Naive thymus-derived CD4-positive, alpha-beta T cell (primary cell): ENCODE measurements at regions of chr2 and their contacts with region 1.

Region 1: GRCh38 chr2:42196403-42197267 is 27.5 kb downstream of the EML4 start:
- DNase-seq: peak in 7 of 9 donors; percentile 56 to 75 (median 68)
- ATAC-seq: peak; percentile 91
- H3K4me3 ChIP-seq: no peak overlapping the region
- H3K4me3 Mint-ChIP-seq: peak overlapping the region in 9 of 10 donors; percentile 1 to 66 (median 41)
- H3K27ac ChIP-seq: peak overlapping the region; percentile 22
- H3K27ac Mint-ChIP-seq: peak overlapping the region in 8 of 9 donors; percentile 17 to 91 (median 74)
- H3K4me1 ChIP-seq: peaks cover 42 to 48% of the 10 kb centered on the region in 2 donors
- H3K4me1 Mint-ChIP-seq: peaks cover 54 to 93% (median 84%) of the 10 kb centered on the region in 7 donors
- H3K27me3 ChIP-seq: no peaks in the 10 kb centered on the region
- H3K27me3 Mint-ChIP-seq: no peaks in the 10 kb centered on the region

Region 2: DNA sequence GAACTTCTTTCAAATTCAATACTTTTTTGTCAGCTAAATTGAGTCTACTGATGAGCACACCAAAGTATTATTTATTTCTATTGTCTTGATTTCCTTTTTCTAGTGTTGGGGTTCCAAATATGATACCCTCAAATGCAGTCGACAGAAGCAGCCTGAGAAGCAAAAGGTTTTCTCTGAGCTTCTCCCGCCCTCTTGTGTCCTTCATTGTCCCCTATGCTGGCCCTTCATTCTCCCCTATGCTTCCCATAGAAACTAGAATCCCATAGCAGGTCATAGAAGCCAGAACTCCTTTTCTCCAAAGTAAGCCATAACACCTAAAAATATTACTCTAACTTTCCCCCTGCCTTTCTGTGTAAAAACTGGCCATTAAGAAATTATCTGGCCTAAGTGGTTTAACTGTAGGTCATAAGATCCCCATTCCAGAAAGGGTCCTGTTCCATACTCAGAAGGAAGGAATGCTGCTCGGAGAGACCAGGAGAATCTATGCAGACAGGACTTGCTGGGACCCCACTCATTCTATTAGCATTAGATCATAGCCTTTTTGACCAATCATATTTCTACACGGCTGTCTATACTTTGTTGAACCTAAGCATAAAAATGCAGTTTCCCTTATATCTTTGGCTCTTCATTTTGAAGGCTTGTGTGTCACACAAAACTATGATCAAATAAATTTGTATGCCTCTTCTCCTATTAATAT is 913.4 kb before region 1 on chr2:
- CTCF ChIA-PET with region 1: no interaction called
- POLR2A ChIA-PET with region 1: no interaction called
- intact Hi-C with region 1: no loop called
- DNase-seq: no peak
- ATAC-seq: no peak
- H3K4me3 ChIP-seq: no peak overlapping the region
- H3K4me3 Mint-ChIP-seq: no peak overlapping the region
- H3K27ac ChIP-seq: no peak overlapping the region
- H3K27ac Mint-ChIP-seq: no peak overlapping the region
- H3K4me1 ChIP-seq: no peaks in the 10 kb centered on the region
- H3K4me1 Mint-ChIP-seq: no peaks in the 10 kb centered on the region
- H3K27me3 ChIP-seq: no peaks in the 10 kb centered on the region
- H3K27me3 Mint-ChIP-seq: peaks cover 0 to 3% (median 0%) of the 10 kb centered on the region in 5 donors

Region 3: DNA sequence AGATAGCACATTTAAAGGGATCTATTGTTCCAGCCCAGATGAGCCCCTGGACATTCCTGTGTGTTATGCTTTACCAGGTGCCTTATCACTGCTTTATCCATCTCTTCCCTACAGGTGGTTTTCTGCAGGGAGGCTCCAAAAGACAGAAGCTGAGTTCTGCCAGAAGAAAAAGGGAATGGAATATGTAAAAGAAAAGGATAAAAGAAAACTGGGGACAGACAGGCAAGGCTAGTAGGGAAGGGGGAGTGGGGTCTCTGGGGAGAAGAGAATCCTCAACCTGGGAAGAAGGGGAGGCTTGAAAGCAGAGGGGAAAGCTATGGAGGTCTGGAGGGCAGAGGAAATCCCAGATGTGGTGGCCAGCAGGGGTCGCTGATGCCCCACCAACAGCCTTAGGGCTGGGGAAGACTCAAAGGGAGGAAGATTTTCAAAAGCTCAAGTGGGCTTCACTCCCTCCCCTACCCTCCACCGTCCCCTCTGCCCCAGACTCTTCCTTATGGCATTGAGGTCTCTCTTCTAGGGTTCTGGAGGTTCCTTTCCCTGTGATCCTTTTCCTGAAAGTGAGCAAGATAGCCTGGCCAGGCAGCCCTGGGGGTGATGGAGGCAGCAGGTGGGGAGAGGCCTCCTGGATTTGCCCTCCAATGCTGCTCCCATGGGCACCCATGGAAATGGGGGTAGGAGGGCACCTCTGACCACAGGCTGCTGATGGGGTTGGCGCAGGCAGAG is 326.9 kb before region 1 on chr2:
- CTCF ChIA-PET with region 1: interaction called, 3 read pairs
- POLR2A ChIA-PET with region 1: no interaction called
- intact Hi-C with region 1: loop called in 1 of 2 experiments (anchors 1 kb)
- DNase-seq: peak; percentile 31 to 64 (median 52)
- ATAC-seq: peak; percentile 79
- H3K4me3 ChIP-seq: no peak overlapping the region
- H3K4me3 Mint-ChIP-seq: no peak overlapping the region
- H3K27ac ChIP-seq: no peak overlapping the region
- H3K27ac Mint-ChIP-seq: no peak overlapping the region
- H3K4me1 ChIP-seq: no peaks in the 10 kb centered on the region
- H3K4me1 Mint-ChIP-seq: peaks cover 0 to 13% (median 0%) of the 10 kb centered on the region in 7 donors
- H3K27me3 ChIP-seq: no peaks in the 10 kb centered on the region
- H3K27me3 Mint-ChIP-seq: peaks cover 0 to 22% (median 0%) of the 10 kb centered on the region in 5 donors

Region 4: GRCh38 chr2:42127425-42128424 is 68.9 kb before region 1 on chr2:
- CTCF ChIA-PET with region 1: interaction called, 8 read pairs
- POLR2A ChIA-PET with region 1: interaction called, 6 read pairs
- intact Hi-C with region 1: loop called (anchors 1 to 2 kb)
- DNase-seq: peak in 7 of 9 donors; percentile 42 to 69 (median 60)
- ATAC-seq: peak; percentile 63
- H3K4me3 ChIP-seq: peak overlapping the region; percentile 33
- H3K4me3 Mint-ChIP-seq: peak overlapping the region; percentile 63 to 86 (median 78)
- H3K27ac ChIP-seq: peak overlapping the region; percentile 70
- H3K27ac Mint-ChIP-seq: peak overlapping the region; percentile 68 to 97 (median 94)
- H3K4me1 ChIP-seq: peaks cover 87 to 96% of the 10 kb centered on the region in 2 donors
- H3K4me1 Mint-ChIP-seq: peaks cover 72 to 98% (median 92%) of the 10 kb centered on the region in 7 donors
- H3K27me3 ChIP-seq: no peaks in the 10 kb centered on the region
- H3K27me3 Mint-ChIP-seq: no peaks in the 10 kb centered on the region

Region 5: GRCh38 chr2:42183775-42184174 is 12.9 kb before region 1 on chr2:
- CTCF ChIA-PET with region 1: interaction called, 9 read pairs
- POLR2A ChIA-PET with region 1: interaction called, 4 read pairs
- intact Hi-C with region 1: loop called in 1 of 2 experiments (anchors 1 kb)
- DNase-seq: no peak
- ATAC-seq: peak; percentile 57
- H3K4me3 ChIP-seq: no peak overlapping the region
- H3K4me3 Mint-ChIP-seq: peak overlapping the region in 1 of 10 donors; percentile 10
- H3K27ac ChIP-seq: no peak overlapping the region
- H3K27ac Mint-ChIP-seq: peak overlapping the region in 2 of 9 donors; percentile 21 to 64
- H3K4me1 ChIP-seq: peaks cover 54 to 56% of the 10 kb centered on the region in 2 donors
- H3K4me1 Mint-ChIP-seq: peaks cover 15 to 90% (median 64%) of the 10 kb centered on the region in 7 donors
- H3K27me3 ChIP-seq: no peaks in the 10 kb centered on the region
- H3K27me3 Mint-ChIP-seq: no peaks in the 10 kb centered on the region

Region 6: DNA sequence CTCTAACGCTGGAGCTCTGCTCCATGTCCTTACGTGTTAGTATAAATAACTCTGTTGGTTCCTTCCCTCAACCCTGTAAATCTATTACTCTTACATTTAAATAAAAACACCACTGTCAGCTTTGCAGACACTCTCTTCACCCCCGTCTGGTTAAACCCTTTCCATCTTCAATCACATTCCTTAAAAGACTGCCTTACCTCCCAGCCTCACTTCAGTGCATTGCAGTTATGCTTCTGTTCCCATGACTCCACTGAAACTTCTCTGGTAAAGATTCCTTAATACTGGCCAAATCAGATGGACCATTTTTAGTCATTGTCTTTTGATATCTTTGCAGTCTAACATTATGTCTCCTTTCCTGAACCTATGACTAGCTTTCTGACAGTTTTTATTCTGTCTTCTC is 34.3 kb after region 1 on chr2:
- CTCF ChIA-PET with region 1: no interaction called
- POLR2A ChIA-PET with region 1: no interaction called
- intact Hi-C with region 1: no loop called
- DNase-seq: no peak
- ATAC-seq: no peak
- H3K4me3 ChIP-seq: no peak overlapping the region
- H3K4me3 Mint-ChIP-seq: peak overlapping the region in 6 of 10 donors; percentile 11 to 54 (median 20)
- H3K27ac ChIP-seq: no peak overlapping the region
- H3K27ac Mint-ChIP-seq: peak overlapping the region in 8 of 9 donors; percentile 1 to 71 (median 48)
- H3K4me1 ChIP-seq: peaks cover 0 to 25% of the 10 kb centered on the region in 2 donors
- H3K4me1 Mint-ChIP-seq: peaks cover 33 to 88% (median 82%) of the 10 kb centered on the region in 7 donors
- H3K27me3 ChIP-seq: no peaks in the 10 kb centered on the region
- H3K27me3 Mint-ChIP-seq: no peaks in the 10 kb centered on the region

Region 7: DNA sequence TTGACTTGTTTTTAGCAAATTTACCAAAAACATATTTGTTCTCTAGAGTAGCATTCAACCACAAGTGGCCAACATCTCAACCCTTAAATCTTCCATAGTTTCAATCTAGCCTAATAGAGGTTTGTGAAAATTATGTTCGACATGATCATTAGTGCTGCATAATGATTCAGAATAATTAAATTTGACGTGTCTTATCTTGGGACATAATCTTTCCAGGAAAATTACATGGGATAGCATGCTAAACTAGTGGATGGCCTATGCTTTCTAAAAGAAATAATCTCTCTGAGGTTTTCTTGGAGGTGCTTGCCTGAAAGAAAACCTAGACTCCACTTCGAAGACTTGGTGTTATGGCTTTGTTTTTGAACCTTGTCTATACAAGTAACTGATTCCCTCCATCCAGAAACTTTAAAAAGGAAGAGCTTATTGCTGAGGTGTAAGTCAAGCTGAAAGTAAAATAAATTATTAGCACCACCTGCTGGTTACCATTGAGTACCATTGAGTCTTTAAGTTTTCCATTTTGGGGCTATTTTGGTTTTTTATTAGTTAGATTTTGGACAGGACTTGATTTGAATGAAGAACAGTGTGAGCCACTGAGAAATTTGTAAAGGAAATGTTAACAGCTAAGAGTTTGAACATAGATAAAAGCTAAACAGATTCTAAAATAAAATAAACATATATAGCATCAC is 131.7 kb after region 1 on chr2:
- CTCF ChIA-PET with region 1: interaction called, 7 read pairs
- POLR2A ChIA-PET with region 1: no interaction called
- intact Hi-C with region 1: loop called in 1 of 2 experiments (anchors 1 kb)
- DNase-seq: peak in 5 of 9 donors; percentile 13 to 34 (median 32)
- ATAC-seq: peak; percentile 57
- H3K4me3 ChIP-seq: no peak overlapping the region
- H3K4me3 Mint-ChIP-seq: no peak overlapping the region
- H3K27ac ChIP-seq: no peak overlapping the region
- H3K27ac Mint-ChIP-seq: peak overlapping the region in 7 of 9 donors; percentile 12 to 77 (median 57)
- H3K4me1 ChIP-seq: no peaks in the 10 kb centered on the region
- H3K4me1 Mint-ChIP-seq: peaks cover 0 to 5% (median 0%) of the 10 kb centered on the region in 7 donors
- H3K27me3 ChIP-seq: no peaks in the 10 kb centered on the region
- H3K27me3 Mint-ChIP-seq: no peaks in the 10 kb centered on the region